ENCODE measurements at regions of chr20 and their contacts with region 1.

Region 1: GRCh38 chr20:31572701-31573554 is 32.2 kb upstream of the ID1 start:
- DNase-seq: peak; percentile 98 to 99
- H3K4me3 ChIP-seq: peak overlapping the region; percentile 59 to 63
- H3K27ac ChIP-seq: peak overlapping the region; percentile 87
- H3K4me1 ChIP-seq: peaks cover 0 to 44% (median 28%) of the 10 kb centered on the region in 4 donors
- H3K27me3 ChIP-seq: no peaks in the 10 kb centered on the region
- CTCF ChIP-seq: no peak

Region 2: DNA sequence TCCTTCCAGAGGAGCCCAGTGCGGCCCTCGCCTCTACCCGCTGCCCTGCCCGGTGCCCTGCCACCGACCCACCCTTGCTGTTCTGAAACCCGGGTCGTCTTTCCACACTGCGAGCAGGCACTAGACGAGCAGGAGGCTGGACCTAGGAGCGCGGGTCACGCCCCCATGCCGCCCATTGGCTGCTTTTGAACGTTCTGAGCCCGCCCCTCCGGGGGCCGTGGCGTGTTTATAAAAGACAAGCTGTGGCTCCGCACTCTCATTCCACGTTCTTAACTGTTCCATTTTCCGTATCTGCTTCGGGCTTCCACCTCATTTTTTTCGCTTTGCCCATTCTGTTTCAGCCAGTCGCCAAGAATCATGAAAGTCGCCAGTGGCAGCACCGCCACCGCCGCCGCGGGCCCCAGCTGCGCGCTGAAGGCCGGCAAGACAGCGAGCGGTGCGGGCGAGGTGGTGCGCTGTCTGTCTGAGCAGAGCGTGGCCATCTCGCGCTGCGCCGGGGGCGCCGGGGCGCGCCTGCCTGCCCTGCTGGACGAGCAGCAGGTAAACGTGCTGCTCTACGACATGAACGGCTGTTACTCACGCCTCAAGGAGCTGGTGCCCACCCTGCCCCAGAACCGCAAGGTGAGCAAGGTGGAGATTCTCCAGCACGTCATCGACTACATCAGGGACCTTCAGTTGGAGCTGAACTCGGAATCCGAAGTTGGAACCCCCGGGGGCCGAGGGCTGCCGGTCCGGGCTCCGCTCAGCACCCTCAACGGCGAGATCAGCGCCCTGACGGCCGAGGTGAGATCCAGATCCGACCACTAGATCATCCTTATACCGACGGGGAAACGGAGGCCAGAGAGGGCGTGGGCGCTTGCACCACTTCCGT is 32.3 kb after region 1 on chr20 and contains the start of gene ID1:
- intact Hi-C with region 1: loop called (anchors 2 kb)
- DNase-seq: peak; percentile 96 to 98
- H3K4me3 ChIP-seq: peak within 1 kb of the TSS; percentile 68 to 83
- H3K27ac ChIP-seq: peak within 1 kb of the TSS; percentile 90 to 94
- H3K4me1 ChIP-seq: peaks cover 0 to 46% (median 30%) of the 10 kb centered on the region in 4 donors
- H3K27me3 ChIP-seq: no peaks in the 10 kb centered on the region
- CTCF ChIP-seq: no peak